CD4-positive, alpha-beta memory T cell (primary cell): ENCODE measurements at regions of chr17 and their contacts with region 1.

Region 1: GRCh38 chr17:78421484-78422266 is 43.2 kb downstream of the PGS1 start:
- DNase-seq: peak; percentile 63 to 74 (median 64)
- H3K4me3 ChIP-seq: no peak overlapping the region
- H3K4me3 Mint-ChIP-seq: no peak overlapping the region
- H3K27ac ChIP-seq: no peak overlapping the region
- H3K27ac Mint-ChIP-seq: peak overlapping the region in 6 of 7 donors; percentile 12 to 79 (median 54)
- H3K4me1 ChIP-seq: peaks cover 9% of the 10 kb centered on the region
- H3K4me1 Mint-ChIP-seq: peaks cover 10 to 22% (median 14%) of the 10 kb centered on the region in 4 donors
- H3K27me3 ChIP-seq: no peaks in the 10 kb centered on the region
- H3K27me3 Mint-ChIP-seq: no peaks in the 10 kb centered on the region

Region 2: GRCh38 chr17:78289802-78290363 is 131.8 kb before region 1 on chr17:
- CTCF ChIA-PET with region 1: interaction called, 75 read pairs
- POLR2A ChIA-PET with region 1: no interaction called
- intact Hi-C with region 1: loop called (anchors 1 kb)
- DNase-seq: peak; percentile 72 to 78 (median 74)
- H3K4me3 ChIP-seq: no peak overlapping the region
- H3K4me3 Mint-ChIP-seq: no peak overlapping the region
- H3K27ac ChIP-seq: no peak overlapping the region
- H3K27ac Mint-ChIP-seq: no peak overlapping the region
- H3K4me1 ChIP-seq: peaks cover 8% of the 10 kb centered on the region
- H3K4me1 Mint-ChIP-seq: peaks cover 0 to 7% (median 1%) of the 10 kb centered on the region in 4 donors
- H3K27me3 ChIP-seq: no peaks in the 10 kb centered on the region
- H3K27me3 Mint-ChIP-seq: no peaks in the 10 kb centered on the region

Region 3: GRCh38 chr17:78383725-78384471 is 37.8 kb before region 1 on chr17:
- CTCF ChIA-PET with region 1: interaction called, 8 read pairs
- POLR2A ChIA-PET with region 1: interaction called, 5 read pairs
- intact Hi-C with region 1: loop called (anchors 5 kb)
- DNase-seq: peak in 1 of 5 donors; percentile 49
- H3K4me3 ChIP-seq: peak overlapping the region; percentile 17 to 24
- H3K4me3 Mint-ChIP-seq: peak overlapping the region; percentile 59 to 91 (median 73)
- H3K27ac ChIP-seq: peak overlapping the region; percentile 40
- H3K27ac Mint-ChIP-seq: peak overlapping the region; percentile 85 to 96 (median 94)
- H3K4me1 ChIP-seq: peaks cover 97% of the 10 kb centered on the region
- H3K4me1 Mint-ChIP-seq: peaks cover 65 to 95% (median 83%) of the 10 kb centered on the region in 4 donors
- H3K27me3 ChIP-seq: no peaks in the 10 kb centered on the region
- H3K27me3 Mint-ChIP-seq: no peaks in the 10 kb centered on the region

Region 4: DNA sequence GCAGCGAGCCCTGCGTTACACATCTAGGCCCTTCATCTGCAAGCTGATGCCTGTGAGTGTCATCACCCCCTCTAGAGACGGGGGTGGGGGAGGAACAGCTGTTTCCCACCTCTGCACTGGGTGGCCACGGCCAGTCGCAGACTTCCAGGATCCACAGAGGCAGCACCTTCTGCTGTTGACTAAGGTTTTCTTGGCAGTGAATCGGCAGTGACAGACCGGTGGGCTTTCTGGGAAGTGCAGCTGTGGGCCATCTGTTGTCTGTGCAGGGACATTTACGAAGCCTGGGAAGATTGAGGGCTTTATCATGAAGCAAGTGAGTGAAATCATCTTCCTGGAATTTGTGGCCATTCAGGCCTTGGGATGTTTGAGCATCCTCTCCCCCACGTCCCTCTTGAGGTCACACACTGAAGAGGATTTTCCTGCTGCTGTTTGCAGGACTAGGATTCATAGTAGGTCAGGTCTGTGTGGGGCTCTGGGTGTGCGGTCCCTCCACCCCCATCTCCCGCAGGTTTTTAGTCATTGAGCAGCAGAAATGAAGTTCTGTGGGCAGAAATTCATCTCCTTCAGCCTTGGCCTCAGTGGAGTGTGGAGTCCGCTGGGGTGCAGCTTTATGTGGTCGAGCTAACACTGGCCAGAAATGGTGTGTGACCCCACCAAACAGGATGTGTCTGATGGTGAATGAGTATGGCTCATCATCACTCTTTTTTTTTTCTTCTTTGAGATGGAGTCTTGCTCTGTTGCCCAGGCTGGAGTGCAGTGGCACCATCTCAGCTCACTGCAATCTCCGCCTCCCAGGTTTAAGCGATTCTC is 31.2 kb before region 1 on chr17:
- CTCF ChIA-PET with region 1: interaction called, 11 read pairs
- POLR2A ChIA-PET with region 1: interaction called, 4 read pairs
- intact Hi-C with region 1: no loop called
- DNase-seq: no peak
- H3K4me3 ChIP-seq: no peak overlapping the region
- H3K4me3 Mint-ChIP-seq: peak overlapping the region in 1 of 8 donors; percentile 20
- H3K27ac ChIP-seq: no peak overlapping the region
- H3K27ac Mint-ChIP-seq: peak overlapping the region in 3 of 7 donors; percentile 57 to 70 (median 60)
- H3K4me1 ChIP-seq: peaks cover 45% of the 10 kb centered on the region
- H3K4me1 Mint-ChIP-seq: peaks cover 40 to 80% (median 52%) of the 10 kb centered on the region in 4 donors
- H3K27me3 ChIP-seq: no peaks in the 10 kb centered on the region
- H3K27me3 Mint-ChIP-seq: no peaks in the 10 kb centered on the region